CD4-positive, alpha-beta memory T cell (primary cell): ENCODE measurements at regions of chr21 and their contacts with region 1.

Region 1: GRCh38 chr21:15729674-15730483 is at the start of gene USP25:
- DNase-seq: peak; percentile 83 to 86 (median 84)
- H3K4me3 ChIP-seq: peak within 1 kb of the TSS; percentile 47 to 65
- H3K4me3 Mint-ChIP-seq: peak within 1 kb of the TSS; percentile 82 to 98 (median 94)
- H3K27ac ChIP-seq: peak within 1 kb of the TSS; percentile 65
- H3K27ac Mint-ChIP-seq: peak within 1 kb of the TSS; percentile 83 to 96 (median 95)
- H3K4me1 ChIP-seq: peaks cover 38% of the 10 kb centered on the region
- H3K4me1 Mint-ChIP-seq: peaks cover 17 to 43% (median 29%) of the 10 kb centered on the region in 4 donors
- H3K27me3 ChIP-seq: no peaks in the 10 kb centered on the region
- H3K27me3 Mint-ChIP-seq: no peaks in the 10 kb centered on the region
- total RNA-seq, gene USP25: 72.7 to 73.5 TPM

Region 2: GRCh38 chr21:14382835-14383594 is 1346.9 kb before region 1 on chr21 and contains the start of gene HSPA13:
- CTCF ChIA-PET with region 1: interaction called, 3 read pairs
- POLR2A ChIA-PET with region 1: no interaction called
- intact Hi-C with region 1: loop called (anchors 2 kb)
- DNase-seq: peak; percentile 98 to 100 (median 99)
- H3K4me3 ChIP-seq: peak within 1 kb of the TSS; percentile 77 to 80
- H3K4me3 Mint-ChIP-seq: peak within 1 kb of the TSS; percentile 98 to 100 (median 100)
- H3K27ac ChIP-seq: peak within 1 kb of the TSS; percentile 84
- H3K27ac Mint-ChIP-seq: peak within 1 kb of the TSS; percentile 99 to 100 (median 100)
- H3K4me1 ChIP-seq: peaks cover 35% of the 10 kb centered on the region
- H3K4me1 Mint-ChIP-seq: peaks cover 16 to 51% (median 32%) of the 10 kb centered on the region in 4 donors
- H3K27me3 ChIP-seq: no peaks in the 10 kb centered on the region
- H3K27me3 Mint-ChIP-seq: no peaks in the 10 kb centered on the region
- total RNA-seq, gene HSPA13: 32.0 to 38.5 TPM

Region 3: DNA sequence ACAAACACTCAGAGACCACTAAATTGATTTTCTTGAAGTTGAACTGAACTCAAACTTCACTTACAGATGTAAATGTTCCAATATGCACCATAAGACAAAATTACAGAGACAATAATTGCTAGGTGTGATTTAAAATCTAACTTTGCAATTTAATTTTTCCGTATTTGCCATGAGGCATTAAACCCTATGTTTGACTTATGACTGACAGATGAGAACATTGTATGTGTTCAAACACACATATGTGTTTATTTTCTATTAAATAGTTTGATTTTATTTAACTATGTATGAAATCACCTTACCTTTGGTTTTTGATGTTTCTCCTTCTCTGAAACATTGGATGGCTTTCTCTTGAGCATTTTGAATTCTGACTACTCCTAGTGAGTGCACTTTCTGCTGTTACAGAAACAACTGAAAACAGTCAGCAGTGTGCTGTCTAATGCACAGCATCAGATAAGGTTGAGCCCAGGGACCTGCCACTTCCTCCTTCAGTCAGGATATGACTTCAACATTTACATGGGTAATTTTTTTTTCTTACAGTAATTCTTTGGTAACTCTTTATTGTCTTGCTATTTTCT is 1183.9 kb before region 1 on chr21 and contains the start of gene SAMSN1:
- CTCF ChIA-PET with region 1: no interaction called
- POLR2A ChIA-PET with region 1: no interaction called
- intact Hi-C with region 1: loop called (anchors 5 kb)
- DNase-seq: peak; percentile 79 to 90 (median 85)
- H3K4me3 ChIP-seq: peak within 1 kb of the TSS; percentile 48 to 98
- H3K4me3 Mint-ChIP-seq: peak within 1 kb of the TSS; percentile 89 to 99 (median 94)
- H3K27ac ChIP-seq: peak within 1 kb of the TSS; percentile 78
- H3K27ac Mint-ChIP-seq: peak within 1 kb of the TSS; percentile 87 to 97 (median 95)
- H3K4me1 ChIP-seq: peaks cover 78% of the 10 kb centered on the region
- H3K4me1 Mint-ChIP-seq: peaks cover 42 to 79% (median 61%) of the 10 kb centered on the region in 4 donors
- H3K27me3 ChIP-seq: no peaks in the 10 kb centered on the region
- H3K27me3 Mint-ChIP-seq: no peaks in the 10 kb centered on the region
- total RNA-seq, gene SAMSN1: 58.0 to 59.5 TPM

Region 4: GRCh38 chr21:15742052-15742670 is 12.3 kb after region 1 on chr21:
- CTCF ChIA-PET with region 1: no interaction called
- POLR2A ChIA-PET with region 1: interaction called, 4 read pairs
- intact Hi-C with region 1: loop called (anchors 2 kb)
- DNase-seq: no peak
- H3K4me3 ChIP-seq: no peak overlapping the region
- H3K4me3 Mint-ChIP-seq: peak overlapping the region in 6 of 8 donors; percentile 2 to 57 (median 30)
- H3K27ac ChIP-seq: no peak overlapping the region
- H3K27ac Mint-ChIP-seq: peak overlapping the region in 5 of 7 donors; percentile 19 to 89 (median 33)
- H3K4me1 ChIP-seq: peaks cover 72% of the 10 kb centered on the region
- H3K4me1 Mint-ChIP-seq: peaks cover 65 to 92% (median 77%) of the 10 kb centered on the region in 4 donors
- H3K27me3 ChIP-seq: no peaks in the 10 kb centered on the region
- H3K27me3 Mint-ChIP-seq: no peaks in the 10 kb centered on the region

Region 5: GRCh38 chr21:15761507-15762100 is 31.7 kb after region 1 on chr21:
- CTCF ChIA-PET with region 1: no interaction called
- POLR2A ChIA-PET with region 1: no interaction called
- intact Hi-C with region 1: no loop called
- DNase-seq: no peak
- H3K4me3 ChIP-seq: no peak overlapping the region
- H3K4me3 Mint-ChIP-seq: peak overlapping the region in 5 of 8 donors; percentile 1 to 35 (median 11)
- H3K27ac ChIP-seq: no peak overlapping the region
- H3K27ac Mint-ChIP-seq: peak overlapping the region in 1 of 7 donors; percentile 39
- H3K4me1 ChIP-seq: peaks cover 40% of the 10 kb centered on the region
- H3K4me1 Mint-ChIP-seq: peaks cover 52 to 75% (median 62%) of the 10 kb centered on the region in 4 donors
- H3K27me3 ChIP-seq: no peaks in the 10 kb centered on the region
- H3K27me3 Mint-ChIP-seq: no peaks in the 10 kb centered on the region

Region 6: GRCh38 chr21:15804247-15805005 is 74.5 kb after region 1 on chr21:
- CTCF ChIA-PET with region 1: no interaction called
- POLR2A ChIA-PET with region 1: interaction called, 4 read pairs
- intact Hi-C with region 1: loop called (anchors 2 kb)
- DNase-seq: no peak
- H3K4me3 ChIP-seq: no peak overlapping the region
- H3K4me3 Mint-ChIP-seq: no peak overlapping the region
- H3K27ac ChIP-seq: no peak overlapping the region
- H3K27ac Mint-ChIP-seq: peak overlapping the region in 2 of 7 donors; percentile 30 to 61
- H3K4me1 ChIP-seq: no peaks in the 10 kb centered on the region
- H3K4me1 Mint-ChIP-seq: peaks cover 11 to 25% (median 17%) of the 10 kb centered on the region in 4 donors
- H3K27me3 ChIP-seq: no peaks in the 10 kb centered on the region
- H3K27me3 Mint-ChIP-seq: no peaks in the 10 kb centered on the region

Region 7: GRCh38 chr21:15943009-15943666 is 213.3 kb after region 1 on chr21:
- CTCF ChIA-PET with region 1: no interaction called
- POLR2A ChIA-PET with region 1: no interaction called
- intact Hi-C with region 1: no loop called
- DNase-seq: no peak
- H3K4me3 ChIP-seq: no peak overlapping the region
- H3K4me3 Mint-ChIP-seq: no peak overlapping the region
- H3K27ac ChIP-seq: no peak overlapping the region
- H3K27ac Mint-ChIP-seq: no peak overlapping the region
- H3K4me1 ChIP-seq: no peaks in the 10 kb centered on the region
- H3K4me1 Mint-ChIP-seq: no peaks in the 10 kb centered on the region
- H3K27me3 ChIP-seq: no peaks in the 10 kb centered on the region
- H3K27me3 Mint-ChIP-seq: peaks cover 1 to 7% of the 10 kb centered on the region in 2 donors